ENCODE measurements at regions of chr6 and their contacts with region 1.

Region 1: DNA sequence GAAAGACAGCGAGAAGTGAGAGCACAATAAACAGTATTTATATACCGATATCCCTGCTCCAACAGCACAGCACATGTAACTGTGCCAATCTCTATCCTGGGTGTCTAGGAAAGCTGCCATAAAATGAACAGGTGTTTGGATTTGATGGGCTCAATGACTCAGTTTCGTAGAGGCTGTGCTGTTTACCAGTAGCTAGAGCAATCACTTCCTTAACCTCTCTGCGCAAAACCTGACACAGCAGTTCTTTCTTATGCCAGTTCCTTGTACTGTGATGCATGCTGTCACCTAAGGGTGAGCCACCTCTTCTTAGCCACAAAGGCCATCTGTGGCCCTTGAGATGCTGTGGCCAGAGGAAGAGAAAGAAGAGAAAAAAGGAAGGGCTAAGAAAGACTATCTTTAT is 59.3 kb downstream of the SHPRH start:
- DNase-seq: no peak
- ATAC-seq: no peak
- H3K4me3 ChIP-seq: no peak overlapping the region
- H3K27ac ChIP-seq: peak overlapping the region; percentile 25; the same call in 1 of the 2 replicates
- H3K4me1 ChIP-seq: peaks cover 3% of the 10 kb centered on the region
- H3K27me3 ChIP-seq: no peaks in the 10 kb centered on the region
- CTCF ChIP-seq: no peak
- POLR2A ChIP-seq: no peak
- RAD21 ChIP-seq: no peak

Region 2: GRCh38 chr6:145948328-145948727 is 43.5 kb after region 1 on chr6:
- CTCF ChIA-PET with region 1: no interaction called
- POLR2A ChIA-PET with region 1: no interaction called
- dilution Hi-C with region 1: no loop called
- in situ Hi-C with region 1: no loop called
- intact Hi-C with region 1: loop called (anchors 5 kb)
- DNase-seq: peak; percentile 44
- ATAC-seq: peak; percentile 37; the same call in 1 of the 2 replicates
- H3K4me3 ChIP-seq: no peak overlapping the region
- H3K27ac ChIP-seq: no peak overlapping the region
- H3K4me1 ChIP-seq: no peaks in the 10 kb centered on the region
- H3K27me3 ChIP-seq: no peaks in the 10 kb centered on the region
- CTCF ChIP-seq: no peak
- POLR2A ChIP-seq: no peak
- RAD21 ChIP-seq: no peak

Measured in IMR-90 (cell line).